Activated T-helper 2 cell treated with anti-CD3 and anti-CD28 coated beads, Interferon-gamma antibody, Interleukin-2, Interleukin-4, amounts not matched to agents 10 μg/mL and 5 μg/mL and 100 μg/mL, durations not matched to agents 14 hours and 24 hours and 36 hours (primary cell): ENCODE measurements at regions of chr2 and their contacts with region 1.

Region 1: GRCh38 chr2:174634130-174635014 is 36.8 kb upstream of the WIPF1 start:
- DNase-seq: peak; percentile 38
- H3K4me3 Mint-ChIP-seq: peak overlapping the region; percentile 90
- H3K27ac Mint-ChIP-seq: peak overlapping the region; percentile 92
- H3K4me1 Mint-ChIP-seq: peaks cover 69% of the 10 kb centered on the region
- H3K27me3 Mint-ChIP-seq: no peaks in the 10 kb centered on the region

Region 2: DNA sequence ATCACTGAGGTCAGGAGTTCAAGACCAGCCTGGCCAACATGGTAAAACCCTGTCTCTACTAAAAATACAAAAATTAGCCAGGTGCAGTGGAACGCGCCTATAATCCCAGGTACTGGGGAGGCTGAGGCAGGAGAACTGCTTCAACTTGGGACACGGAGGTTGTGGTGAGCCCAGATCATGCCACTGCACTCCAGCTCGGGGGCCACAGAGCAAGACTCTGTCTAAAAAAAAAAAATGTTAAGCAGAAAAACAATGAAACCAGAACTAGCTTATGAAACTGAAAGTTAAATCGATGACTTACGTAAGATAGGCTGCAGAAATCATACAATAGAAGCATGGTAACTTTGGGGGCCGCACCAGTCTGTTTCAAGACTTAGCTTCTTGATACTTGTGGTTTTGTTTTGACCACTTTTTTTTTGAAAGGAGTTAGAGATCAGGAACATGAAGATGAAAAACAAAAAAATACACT is 141.4 kb before region 1 on chr2:
- intact Hi-C with region 1: loop called (anchors 2 kb)
- DNase-seq: peak; percentile 52
- H3K4me3 Mint-ChIP-seq: peak overlapping the region; percentile 68
- H3K27ac Mint-ChIP-seq: peak overlapping the region; percentile 92
- H3K4me1 Mint-ChIP-seq: peaks cover 54% of the 10 kb centered on the region
- H3K27me3 Mint-ChIP-seq: no peaks in the 10 kb centered on the region

Region 3: DNA sequence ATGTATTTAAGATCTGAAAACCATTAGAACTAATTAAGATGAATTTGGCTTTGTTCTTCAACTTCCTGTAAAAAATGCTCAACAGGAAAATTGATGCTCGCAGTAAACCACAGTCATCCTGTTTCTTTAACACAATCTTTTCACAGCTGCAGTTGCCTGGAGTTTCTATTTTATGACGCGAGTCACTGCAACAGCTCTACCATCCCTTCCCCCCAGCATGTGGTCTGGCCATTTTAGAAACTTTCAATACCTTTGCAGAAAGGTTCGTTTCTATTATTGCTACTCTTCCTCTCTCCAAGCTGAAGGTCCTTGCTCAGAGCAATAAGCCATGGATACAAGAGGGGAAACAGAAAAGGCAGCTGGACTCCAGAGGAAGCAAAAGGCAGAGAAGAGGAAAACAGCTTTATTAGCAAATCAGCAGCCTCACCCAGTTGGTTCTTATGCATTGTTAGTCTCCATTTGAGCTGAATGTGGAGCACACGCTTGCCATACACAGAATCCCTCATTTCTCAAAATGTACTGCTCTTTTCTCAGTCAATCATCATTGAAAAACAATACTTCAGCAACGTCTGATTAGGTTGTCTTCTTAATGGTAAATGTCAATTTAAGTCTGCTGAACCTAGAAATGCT is 40.7 kb before region 1 on chr2:
- intact Hi-C with region 1: loop called (anchors 1 kb)
- DNase-seq: peak; percentile 67
- H3K4me3 Mint-ChIP-seq: peak overlapping the region; percentile 86
- H3K27ac Mint-ChIP-seq: peak overlapping the region; percentile 99
- H3K4me1 Mint-ChIP-seq: peaks cover 58% of the 10 kb centered on the region
- H3K27me3 Mint-ChIP-seq: no peaks in the 10 kb centered on the region

Region 4: DNA sequence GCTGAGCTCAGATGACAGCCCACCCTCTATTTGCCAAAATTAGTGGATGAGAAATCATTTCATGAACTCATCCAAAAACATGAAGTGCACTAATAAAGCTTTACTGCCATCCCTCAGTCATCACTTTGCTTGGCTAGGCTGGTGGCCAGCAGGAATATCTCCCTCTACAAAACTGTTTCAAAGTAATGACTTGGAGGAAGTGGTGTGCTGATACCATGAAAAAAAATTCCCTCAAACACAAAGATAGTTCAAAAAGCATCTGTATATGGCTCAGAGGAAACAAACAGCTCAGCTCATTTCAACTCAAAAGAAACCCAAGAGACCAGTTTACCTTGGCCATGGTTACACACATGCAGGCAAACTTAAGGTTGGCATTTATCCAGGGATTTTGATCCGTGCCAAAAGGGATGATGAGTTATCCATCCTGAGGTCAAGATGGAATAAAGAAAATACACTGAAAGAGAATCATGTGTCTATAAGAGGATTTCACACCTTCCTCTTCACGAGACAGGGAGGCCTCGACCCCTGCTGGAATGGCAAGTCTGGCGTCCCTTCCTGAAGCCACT is 18.4 kb before region 1 on chr2:
- intact Hi-C with region 1: loop called (anchors 1 kb)
- DNase-seq: no peak
- H3K4me3 Mint-ChIP-seq: peak overlapping the region; percentile 9
- H3K27ac Mint-ChIP-seq: peak overlapping the region; percentile 80
- H3K4me1 Mint-ChIP-seq: peaks cover 72% of the 10 kb centered on the region
- H3K27me3 Mint-ChIP-seq: no peaks in the 10 kb centered on the region

Region 5: DNA sequence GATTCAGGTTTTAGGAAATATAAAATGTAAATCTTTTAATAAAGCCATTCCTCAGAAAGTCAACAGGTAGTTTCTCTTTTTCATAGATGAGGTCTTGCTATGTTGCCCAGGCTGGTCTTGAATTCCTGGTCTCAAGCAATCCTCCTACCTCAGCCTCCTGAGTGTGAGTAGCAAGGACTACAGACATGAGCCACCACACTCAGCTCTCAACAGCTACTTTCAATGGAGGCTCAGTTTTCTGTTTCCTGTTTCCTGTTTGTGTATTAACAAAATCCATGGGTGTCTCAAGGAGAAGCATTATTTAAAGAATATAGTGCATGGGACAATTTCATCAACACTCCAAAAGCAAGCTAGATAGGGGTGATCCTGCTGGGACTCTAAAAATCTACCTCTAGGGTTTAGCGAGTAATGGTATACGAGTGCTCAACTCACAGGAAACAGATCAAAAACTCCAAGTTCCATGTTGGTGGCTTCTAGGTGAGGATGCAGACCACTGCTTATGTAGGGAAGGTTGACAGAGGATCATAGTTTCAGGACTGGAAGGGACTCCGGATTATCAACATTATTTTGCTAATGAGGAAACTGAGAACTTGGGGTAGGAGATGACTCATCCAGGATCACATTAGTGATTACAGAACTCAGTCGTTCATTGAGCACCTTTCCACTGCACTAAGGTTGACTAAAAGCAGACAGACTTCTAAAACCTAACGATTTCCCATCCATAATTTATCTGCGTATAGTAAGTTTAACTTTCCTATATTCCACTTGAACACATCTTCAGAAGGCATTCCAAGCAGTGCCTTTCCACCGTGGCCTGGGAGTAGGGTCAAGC is 24.9 kb after region 1 on chr2:
- intact Hi-C with region 1: loop called (anchors 2 kb)
- DNase-seq: no peak
- H3K4me3 Mint-ChIP-seq: no peak overlapping the region
- H3K27ac Mint-ChIP-seq: no peak overlapping the region
- H3K4me1 Mint-ChIP-seq: peaks cover 16% of the 10 kb centered on the region
- H3K27me3 Mint-ChIP-seq: no peaks in the 10 kb centered on the region

Region 6: DNA sequence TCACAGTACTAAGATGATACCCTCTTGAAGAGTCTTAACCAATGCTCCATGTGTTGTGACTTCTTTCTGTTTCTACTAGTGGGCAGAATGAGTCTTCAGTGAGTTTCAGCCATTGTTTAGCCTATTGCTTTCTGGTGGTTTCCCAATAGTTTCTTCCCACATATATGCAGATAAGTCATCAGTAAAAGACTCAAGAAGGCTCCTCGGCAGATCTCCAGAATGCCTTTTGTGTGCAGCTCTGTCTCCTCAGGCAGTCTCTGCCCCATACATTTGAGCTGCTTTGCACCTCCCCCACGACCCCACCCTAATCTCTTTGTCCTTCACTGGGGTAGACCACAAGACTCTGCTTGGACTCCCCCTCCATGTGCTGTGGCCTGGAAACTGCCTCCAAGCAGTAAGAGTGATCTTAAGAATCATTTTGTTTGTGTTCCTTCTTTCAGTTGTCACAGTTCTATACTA is 201.5 kb after region 1 on chr2:
- intact Hi-C with region 1: loop called (anchors 10 kb)
- DNase-seq: no peak
- H3K4me3 Mint-ChIP-seq: peak overlapping the region; percentile 58
- H3K27ac Mint-ChIP-seq: peak overlapping the region; percentile 95
- H3K4me1 Mint-ChIP-seq: peaks cover 31% of the 10 kb centered on the region
- H3K27me3 Mint-ChIP-seq: peaks cover 3% of the 10 kb centered on the region